Psoas muscle (tissue), 8 donors: ENCODE measurements at regions of chr18 and their contacts with region 1.

Region 1: DNA sequence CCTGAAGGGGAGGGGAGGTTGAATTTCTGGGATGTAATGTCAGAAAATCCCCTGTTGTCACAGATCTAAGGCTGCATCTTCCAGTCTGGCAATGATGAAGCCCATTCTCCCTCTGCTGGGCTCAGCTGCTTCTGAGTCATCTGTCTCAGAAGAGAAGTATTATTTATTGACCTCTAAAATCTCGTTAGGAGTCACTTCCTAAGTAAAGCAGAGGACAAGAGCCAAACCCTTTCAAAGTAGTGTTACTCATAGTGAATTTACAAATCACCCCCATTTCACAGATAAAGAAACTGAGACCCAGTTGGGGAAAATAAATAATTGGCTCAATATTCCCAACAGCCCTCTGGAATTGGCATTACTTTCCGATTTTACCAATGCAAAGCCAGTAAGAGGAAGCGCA is 167.3 kb upstream of the SKOR2 start:
- DNase-seq: no peak
- ATAC-seq: peak in 1 of 4 donors; percentile 31
- H3K4me3 ChIP-seq: no peak overlapping the region
- H3K27ac ChIP-seq: no peak overlapping the region
- H3K4me1 ChIP-seq: no peaks in the 10 kb centered on the region
- H3K27me3 ChIP-seq: peaks cover 0 to 27% (median 2%) of the 10 kb centered on the region in 3 donors
- CTCF ChIP-seq: no peak

Region 2: DNA sequence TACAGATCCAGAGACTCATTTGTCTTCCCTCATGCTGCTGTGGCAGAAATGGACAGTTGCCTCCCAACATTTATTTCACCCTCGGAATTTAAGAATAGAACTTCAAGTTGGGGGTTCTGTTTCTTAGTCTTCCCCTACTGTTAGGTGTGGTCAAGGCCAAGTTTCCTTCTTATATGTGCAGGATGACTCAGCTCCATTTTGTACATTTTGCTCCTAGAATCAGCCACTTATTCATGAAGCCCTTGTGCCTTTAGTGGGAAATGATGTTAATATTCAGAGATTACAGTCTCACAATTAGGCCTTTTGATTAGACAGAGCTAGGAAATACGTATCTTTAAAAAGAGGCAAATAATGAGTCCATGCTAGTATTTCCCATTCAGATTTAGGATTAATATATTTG is 337.2 kb before region 1 on chr18:
- intact Hi-C with region 1: loop called in 1 of 2 experiments (anchors 10 kb)
- DNase-seq: no peak
- ATAC-seq: no peak
- H3K4me3 ChIP-seq: no peak overlapping the region
- H3K27ac ChIP-seq: no peak overlapping the region
- H3K4me1 ChIP-seq: no peaks in the 10 kb centered on the region
- H3K27me3 ChIP-seq: no peaks in the 10 kb centered on the region
- CTCF ChIP-seq: no peak

Region 3: DNA sequence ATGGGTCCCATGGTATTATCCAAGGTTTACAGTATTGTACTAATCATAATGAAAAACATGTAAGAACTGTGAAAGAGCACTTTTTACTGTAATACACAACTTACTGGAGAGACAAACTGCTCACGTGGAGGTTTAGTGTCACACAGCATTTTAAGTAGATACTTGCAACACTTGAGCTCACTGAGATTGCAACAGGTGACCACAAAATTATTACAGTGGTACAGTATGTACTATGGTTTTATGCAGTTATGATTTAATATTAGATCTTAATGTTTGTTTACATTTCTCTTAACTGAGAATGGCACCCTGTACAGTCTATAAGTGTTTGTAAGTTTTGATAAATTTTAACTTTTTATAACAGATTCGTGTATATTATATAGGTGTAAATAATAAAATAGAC is 48.7 kb before region 1 on chr18:
- intact Hi-C with region 1: no loop called
- DNase-seq: no peak
- ATAC-seq: no peak
- H3K4me3 ChIP-seq: no peak overlapping the region
- H3K27ac ChIP-seq: no peak overlapping the region
- H3K4me1 ChIP-seq: no peaks in the 10 kb centered on the region
- H3K27me3 ChIP-seq: peaks cover 0 to 2% (median 1%) of the 10 kb centered on the region in 3 donors
- CTCF ChIP-seq: no peak

Region 4: GRCh38 chr18:47480166-47480565 is 61.4 kb after region 1 on chr18:
- intact Hi-C with region 1: no loop called
- DNase-seq: no peak
- ATAC-seq: no peak
- H3K4me3 ChIP-seq: no peak overlapping the region
- H3K27ac ChIP-seq: no peak overlapping the region
- H3K4me1 ChIP-seq: no peaks in the 10 kb centered on the region
- H3K27me3 ChIP-seq: peaks cover 0 to 5% (median 0%) of the 10 kb centered on the region in 3 donors
- CTCF ChIP-seq: no peak